Left ventricle myocardium superior (tissue), 1 donor: ENCODE measurements at regions of chr7 and their contacts with region 1.

Region 1: DNA sequence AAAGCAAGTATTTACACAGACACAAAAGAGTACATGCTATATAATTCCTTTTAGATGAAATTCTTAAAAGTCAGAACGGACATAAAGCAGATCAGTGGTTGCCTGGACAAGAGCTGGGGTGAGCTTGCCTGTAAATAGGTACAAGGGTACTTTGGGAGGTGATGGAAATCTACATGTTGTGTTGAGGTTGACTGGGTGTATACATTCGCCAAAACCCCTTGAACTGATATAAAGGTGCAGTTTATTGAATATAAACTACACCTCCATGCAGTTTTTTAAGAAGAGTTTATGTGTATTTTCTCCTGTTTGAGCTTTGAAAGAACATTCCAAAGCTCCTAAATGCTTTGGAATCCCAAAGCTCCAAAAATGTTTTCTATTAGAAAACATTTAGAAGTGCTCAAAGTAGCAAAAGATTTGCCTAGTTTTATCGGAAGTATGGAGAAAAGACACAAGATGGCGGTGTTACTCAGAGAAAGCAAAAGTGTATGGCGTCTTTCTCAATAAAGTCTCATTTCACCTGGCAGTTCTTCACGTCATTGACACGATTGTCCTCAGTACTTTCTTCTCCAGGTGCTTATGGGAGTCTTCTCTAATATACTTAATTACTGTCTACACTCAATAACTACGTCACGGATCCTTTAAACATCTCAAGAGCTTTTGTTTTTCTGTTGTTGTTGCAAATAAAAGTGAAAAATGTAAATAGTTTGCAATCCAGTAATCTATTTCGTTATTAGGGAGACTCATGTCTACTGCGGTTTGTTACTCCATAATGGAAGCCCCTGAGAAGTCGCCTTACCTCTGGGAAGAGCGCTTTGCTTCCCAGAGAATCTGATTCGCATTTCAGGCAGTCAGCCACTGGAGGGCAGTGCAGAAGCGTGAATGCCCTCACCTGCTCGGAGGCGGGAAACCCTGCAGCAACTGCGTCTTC is 14.7 kb upstream of the SEC61G start:
- DNase-seq: peak; percentile 86
- ATAC-seq: peak; percentile 98

Region 2: GRCh38 chr7:54292171-54292925 is 481.4 kb before region 1 on chr7:
- intact Hi-C with region 1: no loop called
- DNase-seq: no peak
- ATAC-seq: no peak

Region 3: GRCh38 chr7:54743580-54743979 is 30.2 kb before region 1 on chr7:
- intact Hi-C with region 1: no loop called
- DNase-seq: no peak
- ATAC-seq: no peak

Region 4: GRCh38 chr7:55255496-55256435 is 482.0 kb after region 1 on chr7:
- intact Hi-C with region 1: loop called (anchors 5 kb)
- DNase-seq: peak; percentile 91
- ATAC-seq: peak; percentile 96

Region 5: GRCh38 chr7:55271069-55271626 is 497.4 kb after region 1 on chr7:
- intact Hi-C with region 1: no loop called
- DNase-seq: no peak
- ATAC-seq: no peak